Mammary epithelial cell (primary cell): ENCODE measurements at regions of chr20 and their contacts with region 1.

Region 1: GRCh38 chr20:35497780-35498189 is 31.7 kb downstream of the C20orf173 start:
- DNase-seq: no peak
- H3K4me3 ChIP-seq: no peak overlapping the region
- H3K27ac ChIP-seq: no peak overlapping the region
- H3K4me1 ChIP-seq: no peaks in the 10 kb centered on the region
- H3K27me3 ChIP-seq: no peaks in the 10 kb centered on the region
- CTCF ChIP-seq: no peak

Region 2: GRCh38 chr20:35306931-35307517 is 190.8 kb before region 1 on chr20:
- CTCF ChIA-PET with region 1: no interaction called
- dilution Hi-C with region 1: no loop called
- in situ Hi-C with region 1: no loop called
- intact Hi-C with region 1: no loop called
- DNase-seq: peak; percentile 63
- H3K4me3 ChIP-seq: no peak overlapping the region
- H3K27ac ChIP-seq: peak overlapping the region; percentile 95
- H3K4me1 ChIP-seq: peaks cover 92% of the 10 kb centered on the region
- H3K27me3 ChIP-seq: no peaks in the 10 kb centered on the region
- CTCF ChIP-seq: peak; percentile 89 to 93

Region 3: GRCh38 chr20:35539756-35540212 is 42.0 kb after region 1 on chr20:
- CTCF ChIA-PET with region 1: no interaction called
- dilution Hi-C with region 1: loop called (anchors 5 kb)
- in situ Hi-C with region 1: no loop called
- intact Hi-C with region 1: no loop called
- DNase-seq: no peak
- H3K4me3 ChIP-seq: no peak overlapping the region
- H3K27ac ChIP-seq: no peak overlapping the region
- H3K4me1 ChIP-seq: peaks cover 5% of the 10 kb centered on the region
- H3K27me3 ChIP-seq: no peaks in the 10 kb centered on the region
- CTCF ChIP-seq: no peak

Region 4: DNA sequence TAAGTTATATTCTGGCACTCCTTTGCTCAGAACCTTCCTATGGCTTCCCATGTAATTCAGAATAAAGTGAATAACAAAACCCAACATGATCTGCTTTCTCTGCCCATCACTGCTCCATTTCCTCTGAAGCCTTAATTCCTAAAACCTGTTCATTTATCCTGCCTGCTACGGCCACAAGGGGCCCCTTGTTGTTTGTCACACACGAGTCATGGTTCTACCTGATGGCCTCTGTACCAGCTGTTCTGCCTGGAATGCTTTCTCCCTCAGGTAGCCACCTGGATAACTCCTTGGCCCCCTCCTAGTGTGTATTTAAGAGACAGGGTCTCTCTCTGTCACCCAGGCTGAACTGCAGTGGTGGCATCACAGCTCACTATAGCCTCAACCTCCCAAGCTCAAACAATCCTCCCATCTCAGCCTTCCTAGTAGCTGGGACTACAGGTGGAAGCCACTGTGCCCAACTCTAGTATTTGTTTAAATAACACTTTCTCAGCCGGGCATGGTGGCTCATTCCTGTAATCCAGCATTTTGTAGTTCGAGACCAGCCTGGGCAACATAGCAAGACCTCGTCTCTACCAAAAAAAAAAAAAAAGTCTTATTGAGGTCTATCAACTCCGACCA is 71.0 kb after region 1 on chr20:
- CTCF ChIA-PET with region 1: interaction called, 5 read pairs
- dilution Hi-C with region 1: loop called (anchors 5 kb)
- in situ Hi-C with region 1: no loop called
- intact Hi-C with region 1: no loop called
- DNase-seq: peak; percentile 26
- H3K4me3 ChIP-seq: no peak overlapping the region
- H3K27ac ChIP-seq: no peak overlapping the region
- H3K4me1 ChIP-seq: no peaks in the 10 kb centered on the region
- H3K27me3 ChIP-seq: no peaks in the 10 kb centered on the region
- CTCF ChIP-seq: peak; percentile 39 to 48